Motor neuron (in vitro differentiated cells): ENCODE measurements at regions of chr2 and their contacts with region 1.

Region 1: DNA sequence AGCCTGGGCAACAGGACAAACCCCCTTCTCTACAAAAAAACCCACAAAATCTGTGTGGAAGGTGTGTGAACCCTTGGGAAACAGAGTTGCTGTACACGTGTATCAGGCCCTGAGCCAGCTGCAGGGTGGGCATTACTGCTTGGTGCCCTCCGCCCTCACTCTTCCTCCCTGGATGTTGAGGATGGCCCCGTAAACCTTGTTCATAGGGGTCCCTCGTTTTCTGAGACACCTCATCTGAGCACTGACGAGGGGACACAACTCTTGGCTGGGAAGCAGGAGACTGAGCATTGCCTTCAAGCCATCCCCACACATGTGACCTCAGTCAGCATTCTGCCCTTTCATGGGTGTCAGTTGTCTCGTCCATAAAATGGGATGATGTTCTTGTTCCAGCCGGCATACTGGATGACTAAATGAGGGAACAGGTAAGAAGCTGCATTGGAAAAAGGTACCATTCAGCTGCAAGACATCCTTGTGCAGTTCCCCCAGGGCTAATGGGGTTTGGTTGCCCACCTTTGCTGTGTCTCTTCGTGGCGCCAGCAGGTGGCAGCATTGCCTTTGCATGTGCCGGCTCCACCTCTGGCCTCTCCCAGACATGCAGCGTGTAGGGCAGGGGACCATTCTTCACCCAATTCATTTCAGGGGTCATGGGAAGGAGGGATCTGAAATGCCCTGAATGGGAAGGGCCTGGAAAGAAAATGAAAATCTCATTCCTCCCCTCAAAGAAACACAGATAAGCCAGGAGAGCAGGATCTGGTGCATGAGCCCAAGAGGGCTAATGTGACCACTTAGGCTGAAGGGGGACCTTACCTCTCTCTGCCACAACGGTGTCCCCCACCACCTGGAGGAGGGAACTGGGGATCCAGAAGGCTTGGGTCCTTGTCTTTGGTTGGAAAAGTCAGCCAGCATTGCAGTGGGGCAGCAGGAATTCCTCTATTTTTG is 36.4 kb upstream of the HAAO start:
- ATAC-seq: peak; percentile 63 to 88 (median 80)
- H3K4me3 ChIP-seq: no peak overlapping the region
- H3K27ac ChIP-seq: no peak overlapping the region
- H3K4me1 ChIP-seq: peaks cover 0 to 3% of the 10 kb centered on the region in 2 donors

Region 2: GRCh38 chr2:42928692-42929545 is 100.2 kb after region 1 on chr2:
- in situ Hi-C with region 1: loop called in 1 of 9 experiments (anchors 25 kb)
- ATAC-seq: peak in 6 of 8 experiments; percentile 7 to 45 (median 30)
- H3K4me3 ChIP-seq: no peak overlapping the region
- H3K27ac ChIP-seq: peak overlapping the region in 1 of 2 donors; percentile 71
- H3K4me1 ChIP-seq: peaks cover 60 to 66% of the 10 kb centered on the region in 2 donors

Region 3: DNA sequence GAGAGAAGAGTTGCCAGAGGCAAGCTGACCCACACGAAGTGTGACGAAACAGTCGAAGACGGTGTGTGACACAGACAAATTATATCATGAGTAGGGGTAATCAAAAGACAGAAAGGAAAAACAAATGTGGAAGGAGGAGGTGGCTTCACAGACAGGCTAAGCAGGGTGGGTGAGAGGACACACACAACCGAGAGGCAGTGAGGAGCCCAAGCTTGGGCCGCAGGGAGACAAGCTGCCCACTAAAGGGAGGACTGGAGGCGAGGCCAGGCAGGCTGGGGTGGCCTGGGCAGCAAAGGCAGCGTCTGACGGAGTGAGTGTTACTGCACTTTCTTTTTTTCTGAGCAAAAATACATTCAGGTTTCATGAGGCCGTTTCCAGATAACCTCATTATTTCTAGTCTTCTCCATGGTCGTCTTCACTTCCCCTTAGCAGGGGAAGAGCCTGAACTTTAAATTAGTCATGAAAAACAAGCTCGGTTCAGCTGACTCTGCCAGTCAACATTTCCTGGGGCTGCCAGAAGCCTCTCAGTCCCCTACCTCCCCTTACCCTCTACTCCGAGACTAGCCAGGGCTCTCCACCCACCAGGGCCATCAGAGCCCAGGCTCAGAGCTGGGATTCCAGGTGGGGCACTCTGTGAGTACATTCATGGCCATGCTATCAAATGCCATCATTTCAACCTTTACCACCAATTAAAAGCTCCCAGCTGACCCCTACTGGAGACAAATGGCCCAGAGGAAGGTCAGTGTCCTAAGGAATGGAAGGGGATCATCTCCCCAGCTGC is 411.4 kb after region 1 on chr2:
- in situ Hi-C with region 1: loop called in 7 of 9 experiments (anchors 10 to 25 kb)
- ATAC-seq: peak in 1 of 8 experiments; percentile 20
- H3K4me3 ChIP-seq: no peak overlapping the region
- H3K27ac ChIP-seq: no peak overlapping the region
- H3K4me1 ChIP-seq: no peaks in the 10 kb centered on the region

Region 4: DNA sequence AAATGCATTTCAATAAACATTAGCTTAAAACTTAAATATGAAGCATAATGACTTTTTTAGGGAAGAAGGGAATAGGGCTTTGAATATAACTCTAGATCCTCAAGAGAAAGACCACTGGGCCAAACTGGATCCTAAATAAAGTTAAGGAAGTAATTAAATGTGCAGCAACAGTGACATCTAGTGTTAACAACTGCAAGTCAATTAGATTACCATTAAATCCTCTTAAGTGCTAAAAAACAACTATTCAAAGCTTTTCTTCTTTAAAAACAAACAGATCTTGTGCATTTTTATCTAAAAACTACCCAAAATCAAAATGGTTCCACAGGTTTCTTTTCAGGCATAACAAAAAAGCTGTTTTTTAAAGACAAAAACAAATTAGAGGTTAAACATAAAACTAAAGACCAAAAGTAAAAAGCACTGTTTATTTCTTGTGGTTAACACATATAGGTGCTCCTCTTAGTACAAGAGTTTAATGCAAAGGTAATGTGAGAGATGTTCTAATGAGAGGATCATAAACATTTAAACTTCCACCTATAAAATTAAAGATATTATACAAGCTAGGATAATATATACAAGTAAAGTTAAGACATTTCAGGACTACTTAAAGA is 655.7 kb after region 1 on chr2:
- in situ Hi-C with region 1: loop called in 6 of 9 experiments (anchors 10 to 25 kb)
- ATAC-seq: peak in 4 of 8 experiments; percentile 47 to 58 (median 52)
- H3K4me3 ChIP-seq: no peak overlapping the region
- H3K27ac ChIP-seq: no peak overlapping the region
- H3K4me1 ChIP-seq: peaks cover 0 to 3% of the 10 kb centered on the region in 2 donors

Region 5: GRCh38 chr2:43542285-43542937 is 713.7 kb after region 1 on chr2:
- in situ Hi-C with region 1: loop called in 1 of 9 experiments (anchors 25 kb)
- ATAC-seq: peak in 2 of 8 experiments; percentile 13 to 59
- H3K4me3 ChIP-seq: no peak overlapping the region
- H3K27ac ChIP-seq: no peak overlapping the region
- H3K4me1 ChIP-seq: no peaks in the 10 kb centered on the region